OCI-LY7 (cell line): ENCODE measurements at regions of chr2 and their contacts with region 1.

Region 1: GRCh38 chr2:168246483-168247340 is 683 bp downstream of the STK39 start:
- DNase-seq: peak; percentile 83
- H3K4me3 ChIP-seq: peak overlapping the region; percentile 82
- H3K27ac ChIP-seq: peak overlapping the region; percentile 86
- H3K4me1 ChIP-seq: peaks cover 34% of the 10 kb centered on the region
- CTCF ChIP-seq: peak; percentile 62

Region 2: DNA sequence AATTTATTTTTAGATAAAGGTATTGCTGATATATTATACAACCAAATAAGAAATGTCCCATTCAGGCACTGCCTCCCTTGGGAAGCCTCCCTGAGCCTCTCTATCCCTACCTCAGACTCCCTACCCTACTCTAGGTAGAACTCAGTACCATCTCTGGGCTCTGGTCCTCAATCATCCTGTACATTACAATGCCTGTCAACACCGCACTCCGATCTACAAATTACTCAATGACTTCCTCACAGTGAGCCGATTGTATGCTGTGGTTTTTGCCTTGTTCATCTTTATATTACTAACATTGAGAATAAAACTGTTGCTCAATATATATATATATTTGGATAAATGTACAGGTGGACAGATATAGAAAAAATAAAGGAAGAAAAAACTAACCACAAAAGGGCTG is 206.8 kb before region 1 on chr2:
- CTCF ChIA-PET with region 1: no interaction called
- POLR2A ChIA-PET with region 1: no interaction called
- intact Hi-C with region 1: loop called (anchors 10 kb)
- DNase-seq: no peak
- H3K4me3 ChIP-seq: no peak overlapping the region
- H3K27ac ChIP-seq: no peak overlapping the region
- H3K4me1 ChIP-seq: peaks cover 39% of the 10 kb centered on the region
- CTCF ChIP-seq: no peak

Region 3: DNA sequence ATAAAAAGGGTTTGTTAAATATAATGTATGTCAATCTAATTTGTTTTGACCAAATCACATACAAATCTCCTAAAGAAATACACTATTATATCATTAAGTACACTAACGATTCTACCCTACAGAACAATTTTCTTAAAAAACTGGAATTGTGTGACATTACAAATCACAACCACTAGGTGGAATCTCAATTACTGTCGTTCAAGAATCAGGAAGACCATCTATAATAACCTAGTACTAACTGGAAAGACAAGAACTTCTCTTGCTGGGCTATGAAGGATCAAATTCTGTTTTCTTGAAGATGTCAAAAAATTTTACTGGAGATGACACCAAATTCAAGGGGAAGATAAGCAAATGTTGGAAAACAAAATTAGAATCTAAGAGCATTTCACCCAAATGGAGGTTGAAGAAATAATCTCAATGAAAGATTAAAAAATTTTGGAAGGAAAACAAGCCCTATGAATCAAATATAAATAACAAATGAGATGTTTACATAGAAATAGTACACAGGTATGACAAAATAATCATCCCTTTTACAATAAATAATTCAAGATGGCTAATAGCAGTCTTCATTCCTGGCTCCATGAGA is 110.2 kb before region 1 on chr2:
- CTCF ChIA-PET with region 1: no interaction called
- POLR2A ChIA-PET with region 1: no interaction called
- intact Hi-C with region 1: loop called (anchors 5 kb)
- DNase-seq: peak; percentile 53
- H3K4me3 ChIP-seq: no peak overlapping the region
- H3K27ac ChIP-seq: no peak overlapping the region
- H3K4me1 ChIP-seq: peaks cover 19% of the 10 kb centered on the region
- CTCF ChIP-seq: peak; percentile 80

Region 4: GRCh38 chr2:168192839-168193616 is 53.7 kb before region 1 on chr2:
- CTCF ChIA-PET with region 1: no interaction called
- POLR2A ChIA-PET with region 1: no interaction called
- intact Hi-C with region 1: loop called (anchors 2 kb)
- DNase-seq: peak; percentile 57
- H3K4me3 ChIP-seq: peak overlapping the region; percentile 30
- H3K27ac ChIP-seq: peak overlapping the region; percentile 12
- H3K4me1 ChIP-seq: peaks cover 29% of the 10 kb centered on the region
- CTCF ChIP-seq: no peak

Region 5: GRCh38 chr2:168890006-168890782 is 643.5 kb after region 1 on chr2 and contains the start of gene SPC25:
- CTCF ChIA-PET with region 1: no interaction called
- POLR2A ChIA-PET with region 1: no interaction called
- intact Hi-C with region 1: loop called (anchors 10 kb)
- DNase-seq: peak; percentile 95
- H3K4me3 ChIP-seq: peak within 1 kb of the TSS; percentile 93
- H3K27ac ChIP-seq: peak within 1 kb of the TSS; percentile 49
- H3K4me1 ChIP-seq: peaks cover 5% of the 10 kb centered on the region
- CTCF ChIP-seq: no peak
- total RNA-seq, gene SPC25: 29.3 and 34.4 TPM in 2 replicates

Region 6: GRCh38 chr2:169584005-169584877 is 1337.5 kb after region 1 on chr2 and contains the start of gene PPIG:
- CTCF ChIA-PET with region 1: no interaction called
- POLR2A ChIA-PET with region 1: no interaction called
- intact Hi-C with region 1: loop called (anchors 10 kb)
- DNase-seq: peak; percentile 94
- H3K4me3 ChIP-seq: peak within 1 kb of the TSS; percentile 88
- H3K27ac ChIP-seq: peak within 1 kb of the TSS; percentile 94
- H3K4me1 ChIP-seq: peaks cover 10% of the 10 kb centered on the region
- CTCF ChIP-seq: no peak
- total RNA-seq, gene PPIG: 33.5 and 48.5 TPM in 2 replicates

Region 7: DNA sequence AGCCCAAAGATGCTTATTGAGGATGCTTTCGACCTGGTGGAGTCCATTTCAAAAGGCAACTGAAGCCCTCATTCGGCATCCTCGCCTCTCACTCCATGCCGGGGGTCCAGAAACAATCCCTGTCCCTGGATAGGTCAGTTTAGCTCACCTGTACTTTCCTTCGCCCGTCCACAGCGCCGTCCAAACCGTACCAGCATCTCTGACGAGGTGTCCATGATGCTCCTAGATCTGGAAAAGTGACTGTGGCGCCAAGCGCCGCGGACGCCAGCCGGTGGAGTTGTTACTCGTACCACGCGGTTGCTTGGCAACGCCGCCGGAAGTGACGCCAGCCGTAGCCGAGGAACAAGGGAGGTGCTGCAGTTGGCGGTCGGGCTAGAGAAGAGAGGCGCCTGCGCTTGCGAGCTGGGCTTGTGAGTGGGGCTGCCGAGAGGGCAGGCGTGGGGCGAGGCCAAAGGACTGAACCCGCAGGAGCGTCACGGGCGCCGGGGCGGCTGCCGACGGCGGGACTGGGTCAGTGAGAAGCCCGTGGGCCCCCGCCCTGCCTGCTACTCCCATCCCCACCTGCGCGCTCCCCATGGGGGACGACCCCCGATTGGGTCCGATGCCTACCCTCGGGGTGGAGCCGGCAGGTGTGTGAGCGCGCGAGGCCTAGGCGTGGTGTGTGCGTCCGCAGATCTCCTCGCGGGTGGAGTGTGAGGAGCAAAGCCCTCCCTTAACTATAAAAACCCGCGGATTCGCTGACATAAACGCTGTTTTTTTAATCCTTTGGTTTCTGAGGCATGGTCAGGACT is 1447.6 kb after region 1 on chr2 and contains the starts of genes CFAP210 and PHOSPHO2:
- CTCF ChIA-PET with region 1: no interaction called
- POLR2A ChIA-PET with region 1: no interaction called
- intact Hi-C with region 1: loop called (anchors 10 kb)
- DNase-seq: peak; percentile 95
- H3K4me3 ChIP-seq: peak within 1 kb of the TSS; percentile 73
- H3K27ac ChIP-seq: peak within 1 kb of the TSS; percentile 13
- H3K4me1 ChIP-seq: peaks cover 16% of the 10 kb centered on the region
- CTCF ChIP-seq: no peak
- total RNA-seq, gene CFAP210: not detected in 2 replicates
- total RNA-seq, gene PHOSPHO2: 2.8 and 4.8 TPM in 2 replicates